Activated CD4-positive, alpha-beta T cell treated with anti-CD3 and anti-CD28 coated beads, Interleukin-2, amount 10 ng/mL, durations not matched to agents 24 days and 14 days (primary cell): ENCODE measurements at regions of chr5 and their contacts with region 1.

Region 1: DNA sequence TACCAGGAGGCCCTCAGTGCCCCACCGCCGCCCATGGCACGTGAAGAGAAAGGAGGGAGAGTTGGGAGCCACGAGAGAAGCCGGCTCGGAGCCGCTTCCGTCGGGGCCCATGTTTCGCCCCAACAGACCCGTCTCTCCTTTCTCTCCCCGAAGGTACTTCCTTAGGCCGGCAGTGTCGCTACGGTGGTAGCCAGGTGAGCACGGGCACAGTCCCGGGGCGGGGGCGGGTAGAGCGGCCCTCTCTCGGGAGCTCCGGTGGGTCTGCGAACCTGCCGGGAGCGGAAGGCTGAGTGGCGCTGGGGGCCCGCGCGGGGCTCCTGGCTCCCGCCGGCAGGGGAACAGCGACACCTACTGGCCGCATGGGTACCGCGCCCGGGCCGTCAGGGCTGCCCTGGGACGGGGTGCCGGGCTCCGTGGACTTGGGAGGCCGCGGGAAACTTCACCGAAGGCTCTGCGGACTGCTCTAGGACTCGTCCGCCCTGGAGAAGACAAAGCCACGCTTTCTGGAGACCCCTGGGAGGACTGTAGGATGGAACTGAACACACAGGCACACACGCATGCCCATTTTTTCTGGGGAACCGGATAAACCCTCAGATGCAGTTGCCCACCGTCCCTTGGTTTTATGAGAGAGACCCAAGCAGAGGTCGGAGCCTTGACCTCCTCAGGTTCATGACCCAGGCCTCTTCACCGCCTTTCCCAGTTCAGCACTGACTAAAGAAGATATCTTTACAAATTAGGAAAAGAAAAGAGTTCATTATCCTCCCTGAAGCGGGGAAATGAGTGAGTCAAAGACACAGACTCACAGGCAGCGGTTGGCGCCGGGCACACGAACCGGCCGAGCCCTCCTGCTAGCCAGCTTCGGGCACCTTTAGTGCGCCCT is 202.5 kb downstream of the MEF2C start:
- DNase-seq: peak; percentile 94
- H3K4me3 Mint-ChIP-seq: peak overlapping the region; percentile 58
- H3K27ac Mint-ChIP-seq: no peak overlapping the region
- H3K4me1 Mint-ChIP-seq: peaks cover 19% of the 10 kb centered on the region
- H3K27me3 Mint-ChIP-seq: peaks cover 82% of the 10 kb centered on the region

Region 2: GRCh38 chr5:87421307-87421706 is 1259.2 kb before region 1 on chr5:
- intact Hi-C with region 1: loop called (anchors 10 kb)
- DNase-seq: no peak
- H3K4me3 Mint-ChIP-seq: no peak overlapping the region
- H3K27ac Mint-ChIP-seq: no peak overlapping the region
- H3K4me1 Mint-ChIP-seq: no peaks in the 10 kb centered on the region
- H3K27me3 Mint-ChIP-seq: peaks cover 9% of the 10 kb centered on the region

Region 3: GRCh38 chr5:87780831-87781760 is 899.4 kb before region 1 on chr5:
- intact Hi-C with region 1: loop called (anchors 1 kb)
- DNase-seq: peak; percentile 92
- H3K4me3 Mint-ChIP-seq: no peak overlapping the region
- H3K27ac Mint-ChIP-seq: no peak overlapping the region
- H3K4me1 Mint-ChIP-seq: peaks cover 2% of the 10 kb centered on the region
- H3K27me3 Mint-ChIP-seq: peaks cover 12% of the 10 kb centered on the region

Region 4: GRCh38 chr5:88660947-88661805 is 19.3 kb before region 1 on chr5:
- intact Hi-C with region 1: loop called (anchors 1 kb)
- DNase-seq: peak; percentile 76
- H3K4me3 Mint-ChIP-seq: peak overlapping the region; percentile 75
- H3K27ac Mint-ChIP-seq: no peak overlapping the region
- H3K4me1 Mint-ChIP-seq: peaks cover 13% of the 10 kb centered on the region
- H3K27me3 Mint-ChIP-seq: peaks cover 67% of the 10 kb centered on the region

Region 5: GRCh38 chr5:88666761-88667495 is 13.6 kb before region 1 on chr5:
- intact Hi-C with region 1: loop called (anchors 1 kb)
- DNase-seq: peak; percentile 72
- H3K4me3 Mint-ChIP-seq: peak overlapping the region; percentile 86
- H3K27ac Mint-ChIP-seq: no peak overlapping the region
- H3K4me1 Mint-ChIP-seq: peaks cover 23% of the 10 kb centered on the region
- H3K27me3 Mint-ChIP-seq: peaks cover 83% of the 10 kb centered on the region

Region 6: GRCh38 chr5:88690409-88691229 is 10.1 kb after region 1 on chr5:
- intact Hi-C with region 1: loop called (anchors 1 kb)
- DNase-seq: peak; percentile 89
- H3K4me3 Mint-ChIP-seq: peak overlapping the region; percentile 43
- H3K27ac Mint-ChIP-seq: peak overlapping the region; percentile 88
- H3K4me1 Mint-ChIP-seq: peaks cover 7% of the 10 kb centered on the region
- H3K27me3 Mint-ChIP-seq: peaks cover 91% of the 10 kb centered on the region

Region 7: GRCh38 chr5:88718736-88719135 is 38.2 kb after region 1 on chr5:
- intact Hi-C with region 1: no loop called
- DNase-seq: no peak
- H3K4me3 Mint-ChIP-seq: no peak overlapping the region
- H3K27ac Mint-ChIP-seq: no peak overlapping the region
- H3K4me1 Mint-ChIP-seq: no peaks in the 10 kb centered on the region
- H3K27me3 Mint-ChIP-seq: peaks cover 11% of the 10 kb centered on the region